Activated T-helper 1 cell treated with anti-CD3 and anti-CD28 coated beads, Interleukin-12 subunit alpha, Interleukin-12 subunit beta, Interleukin-2, Interleukin-4 antibody, amounts not matched to agents 30 ng/mL and 10 ng/mL and 1 ng/mL, durations not matched to agents 14 hours and 24 hours and 36 hours (primary cell): ENCODE measurements at regions of chr19 and their contacts with region 1.

Region 1: GRCh38 chr19:58154679-58155648 is 4.4 kb upstream of the ZNF329 start:
- DNase-seq: peak; percentile 89
- H3K4me3 Mint-ChIP-seq: peak overlapping the region; percentile 76
- H3K27ac Mint-ChIP-seq: peak overlapping the region; percentile 55
- H3K4me1 Mint-ChIP-seq: peaks cover 4% of the 10 kb centered on the region
- H3K27me3 Mint-ChIP-seq: no peaks in the 10 kb centered on the region

Region 2: GRCh38 chr19:57465495-57466395 is 689.2 kb before region 1 on chr19:
- intact Hi-C with region 1: loop called (anchors 1 kb)
- DNase-seq: peak; percentile 19
- H3K4me3 Mint-ChIP-seq: no peak overlapping the region
- H3K27ac Mint-ChIP-seq: no peak overlapping the region
- H3K4me1 Mint-ChIP-seq: no peaks in the 10 kb centered on the region
- H3K27me3 Mint-ChIP-seq: no peaks in the 10 kb centered on the region

Region 3: GRCh38 chr19:58002384-58003173 is 152.4 kb before region 1 on chr19 and contains the start of gene ZNF606:
- intact Hi-C with region 1: loop called (anchors 2 kb)
- DNase-seq: peak; percentile 80
- H3K4me3 Mint-ChIP-seq: peak within 1 kb of the TSS; percentile 84
- H3K27ac Mint-ChIP-seq: peak within 1 kb of the TSS; percentile 67
- H3K4me1 Mint-ChIP-seq: peaks cover 20% of the 10 kb centered on the region
- H3K27me3 Mint-ChIP-seq: no peaks in the 10 kb centered on the region
- total RNA-seq, gene ZNF606: 6.3 and 6.4 TPM in 2 replicates